BJ (cell line): ENCODE measurements at regions of chr20 and their contacts with region 1.

Region 1: GRCh38 chr20:32325706-32326503 is 32.2 kb upstream of the ASXL1 start:
- DNase-seq: no peak
- H3K4me3 ChIP-seq: no peak overlapping the region
- H3K27me3 ChIP-seq: no peaks in the 10 kb centered on the region
- CTCF ChIP-seq: no peak

Region 2: DNA sequence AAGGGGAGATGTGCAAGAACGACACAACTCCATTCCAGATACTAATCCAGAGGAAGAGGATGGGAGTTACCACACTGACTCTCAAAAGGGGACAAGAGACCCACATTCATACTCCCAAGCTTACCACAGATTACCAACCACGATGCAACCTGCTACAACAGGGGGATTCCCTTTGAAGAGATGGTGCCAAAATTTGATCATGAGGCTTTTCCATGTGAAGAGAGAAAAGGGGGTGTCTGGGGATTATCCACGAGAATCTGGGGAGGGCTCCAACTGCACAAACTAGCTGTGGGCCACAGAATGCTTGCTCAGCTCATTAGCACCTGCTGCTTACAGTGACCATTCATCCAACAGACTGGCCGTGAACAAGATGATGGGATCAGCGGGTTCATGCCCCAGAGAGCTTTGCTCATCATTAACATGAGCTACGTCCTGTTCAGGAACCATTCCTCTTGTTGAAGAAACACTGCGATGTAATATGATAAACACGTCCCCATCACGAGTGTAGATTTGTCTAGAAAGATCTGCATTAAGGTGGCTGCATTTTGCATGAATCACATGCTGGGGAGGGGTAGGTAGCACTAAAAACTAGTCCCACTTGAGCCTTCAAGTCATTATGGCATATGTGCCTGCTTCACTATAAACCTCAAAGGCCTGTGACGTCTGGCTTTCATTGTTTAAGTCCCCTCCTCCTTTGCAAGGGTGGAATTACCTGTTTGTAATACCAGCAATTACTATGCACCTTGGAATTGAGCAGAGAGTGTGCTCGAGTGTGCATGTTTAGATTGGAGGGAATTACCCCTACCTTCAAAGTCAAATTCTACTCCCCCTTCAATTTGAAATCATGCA is 122.3 kb before region 1 on chr20:
- CTCF ChIA-PET with region 1: no interaction called
- POLR2A ChIA-PET with region 1: no interaction called
- DNase-seq: no peak
- H3K4me3 ChIP-seq: no peak overlapping the region
- H3K27me3 ChIP-seq: no peaks in the 10 kb centered on the region
- CTCF ChIP-seq: no peak

Region 3: DNA sequence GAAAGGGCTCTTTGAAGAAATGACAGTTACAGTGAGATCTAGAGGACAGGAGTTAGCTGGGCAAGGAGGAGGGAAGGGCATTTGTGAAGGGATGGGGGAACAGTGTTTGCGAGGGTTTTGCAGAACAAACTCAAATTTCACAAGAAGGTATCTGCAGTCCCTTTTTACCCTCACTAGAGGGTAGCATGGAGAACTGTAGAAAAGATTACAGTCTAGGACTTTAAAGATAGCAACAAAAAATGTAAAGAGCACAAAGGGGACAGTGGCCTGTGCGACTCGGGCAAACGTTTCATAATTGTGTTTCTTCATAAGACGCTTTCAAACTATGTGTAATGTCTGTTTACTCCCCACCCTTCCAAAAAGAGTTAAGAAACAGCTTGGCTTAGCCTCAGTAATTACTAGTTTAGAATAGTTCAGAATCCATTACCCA is 11.0 kb after region 1 on chr20:
- CTCF ChIA-PET with region 1: interaction called, 10 read pairs
- POLR2A ChIA-PET with region 1: no interaction called
- DNase-seq: no peak
- H3K4me3 ChIP-seq: no peak overlapping the region
- H3K27me3 ChIP-seq: no peaks in the 10 kb centered on the region
- CTCF ChIP-seq: peak; percentile 70

Region 4: GRCh38 chr20:32437391-32438074 is 111.6 kb after region 1 on chr20:
- CTCF ChIA-PET with region 1: no interaction called
- POLR2A ChIA-PET with region 1: no interaction called
- DNase-seq: no peak
- H3K4me3 ChIP-seq: no peak overlapping the region
- H3K27me3 ChIP-seq: no peaks in the 10 kb centered on the region
- CTCF ChIP-seq: peak; percentile 21; the same call in 1 of the 2 replicates